ENCODE measurements at regions of chr10 and their contacts with region 1.

Region 1: DNA sequence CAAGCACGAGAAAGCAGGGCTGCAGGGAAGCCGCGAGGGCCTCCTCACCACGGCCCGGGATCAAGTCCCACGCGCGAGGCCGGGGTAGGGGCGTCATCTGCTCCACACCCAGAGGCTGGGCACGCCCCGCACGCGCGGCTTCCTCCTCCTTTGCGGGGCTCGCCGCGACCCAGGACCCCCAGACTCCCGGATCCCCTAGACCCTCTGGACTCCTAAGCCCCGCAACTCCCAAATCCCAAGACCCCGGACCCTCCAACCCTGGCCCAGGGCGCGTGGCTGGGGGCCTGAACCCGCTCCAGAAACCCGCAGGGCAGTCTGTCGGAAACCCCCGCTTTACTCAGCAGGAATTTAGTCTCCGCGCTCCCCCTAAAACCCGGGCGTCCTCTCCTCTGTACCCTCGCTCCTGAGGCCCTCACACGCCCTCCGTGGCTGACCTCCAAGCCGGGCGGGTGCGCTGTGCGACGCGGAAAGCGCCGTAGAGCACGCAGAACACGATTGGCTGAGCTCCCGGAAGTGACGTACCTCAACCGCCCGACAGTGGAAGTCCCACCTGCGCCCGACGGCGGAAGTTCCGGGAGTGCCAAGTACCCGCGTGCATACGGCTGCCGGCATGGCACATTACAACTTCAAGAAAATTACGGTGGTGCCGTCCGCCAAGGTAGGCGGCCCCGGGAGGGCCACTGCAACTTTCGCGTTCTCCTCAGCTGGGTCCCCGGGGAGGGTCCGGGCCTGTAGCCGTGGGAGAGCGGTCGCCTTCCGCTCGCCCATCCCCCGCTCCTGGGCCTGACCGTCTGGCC is at the start of gene GTPBP4:
- DNase-seq: peak; percentile 86
- ATAC-seq: peak; percentile 96
- H3K4me3 ChIP-seq: peak within 1 kb of the TSS; percentile 75
- H3K27ac ChIP-seq: peak within 1 kb of the TSS; percentile 92
- H3K4me1 ChIP-seq: peaks cover 14% of the 10 kb centered on the region
- H3K27me3 ChIP-seq: no peaks in the 10 kb centered on the region
- CTCF ChIP-seq: peak; percentile 29 to 69 (median 37); a peak in 4 of 6 replicates
- EP300 ChIP-seq: no peak
- POLR2A ChIP-seq: peak; percentile 88
- RAD21 ChIP-seq: no peak
- polyA plus RNA-seq, gene GTPBP4: 60.3 to 68.0 TPM

Region 2: DNA sequence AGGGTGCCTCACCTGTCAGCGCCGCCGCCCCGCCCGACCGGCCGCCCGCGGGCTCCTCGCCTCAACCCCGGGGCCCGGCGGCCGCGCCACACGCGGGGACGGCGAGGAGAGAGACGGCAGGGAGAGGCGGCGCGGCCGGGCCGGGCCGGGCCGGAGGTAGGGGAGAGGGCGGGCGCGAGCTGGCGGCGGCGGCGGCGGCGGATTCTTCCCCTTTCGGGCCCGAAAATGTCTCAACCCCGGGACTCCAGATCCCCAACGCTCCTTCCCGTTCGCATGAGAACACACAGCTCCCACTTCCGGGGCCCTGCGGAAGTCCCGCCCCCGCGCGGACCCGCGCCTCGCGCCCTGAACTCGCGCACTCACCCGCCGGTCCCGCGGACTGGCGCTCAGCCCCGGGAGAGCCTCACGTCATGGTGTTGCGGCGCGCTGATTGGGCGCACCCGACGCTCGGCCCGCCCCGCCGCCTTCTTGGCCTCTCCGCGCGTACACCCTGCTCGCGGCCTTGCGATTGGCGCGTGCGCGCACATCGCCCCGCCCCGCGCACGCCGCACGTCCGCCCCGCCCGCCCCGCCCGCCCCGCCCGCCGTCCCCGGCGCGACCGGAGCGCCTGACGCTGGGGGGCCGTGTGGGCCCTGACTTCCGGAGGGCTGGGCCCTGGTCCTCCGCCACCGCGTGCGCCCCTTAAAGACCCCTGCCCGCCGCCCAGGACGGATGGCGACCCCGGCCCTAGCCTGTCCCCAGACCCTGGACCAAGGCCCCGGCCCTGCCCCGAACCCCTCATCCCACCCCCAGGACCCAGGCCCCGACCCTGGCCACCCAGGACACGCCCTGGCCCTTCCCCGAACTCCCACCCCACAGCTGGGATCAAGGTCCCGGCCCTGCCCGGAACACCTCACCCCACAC is 56.4 kb before region 1 on chr10 and contains the start of gene LARP4B:
- CTCF ChIA-PET with region 1: interaction called, 5 read pairs
- POLR2A ChIA-PET with region 1: interaction called, 4 read pairs
- RAD21 ChIA-PET with region 1: interaction called, 6 read pairs
- SMC1A ChIA-PET with region 1: interaction called, 7 read pairs
- in situ Hi-C with region 1: no loop called
- intact Hi-C with region 1: loop called (anchors 2 kb)
- DNase-seq: peak; percentile 88
- ATAC-seq: peak; percentile 93
- H3K4me3 ChIP-seq: peak within 1 kb of the TSS; percentile 79
- H3K27ac ChIP-seq: peak within 1 kb of the TSS; percentile 83
- H3K4me1 ChIP-seq: peaks cover 18% of the 10 kb centered on the region
- H3K27me3 ChIP-seq: no peaks in the 10 kb centered on the region
- CTCF ChIP-seq: no peak
- EP300 ChIP-seq: no peak
- POLR2A ChIP-seq: peak; percentile 84
- RAD21 ChIP-seq: no peak
- polyA plus RNA-seq, gene LARP4B: 10.5 to 12.1 TPM

Region 3: GRCh38 chr10:1043532-1043995 is 55.5 kb after region 1 on chr10:
- CTCF ChIA-PET with region 1: interaction called, 4 read pairs
- POLR2A ChIA-PET with region 1: interaction called, 4 read pairs
- RAD21 ChIA-PET with region 1: interaction called, 9 read pairs
- SMC1A ChIA-PET with region 1: interaction called, 8 read pairs
- in situ Hi-C with region 1: no loop called
- intact Hi-C with region 1: loop called (anchors 5 kb)
- DNase-seq: peak; percentile 72
- ATAC-seq: peak; percentile 72
- H3K4me3 ChIP-seq: peak overlapping the region; percentile 69
- H3K27ac ChIP-seq: peak overlapping the region; percentile 84
- H3K4me1 ChIP-seq: peaks cover 5% of the 10 kb centered on the region
- H3K27me3 ChIP-seq: no peaks in the 10 kb centered on the region
- CTCF ChIP-seq: no peak
- EP300 ChIP-seq: no peak
- POLR2A ChIP-seq: no peak
- RAD21 ChIP-seq: no peak

Region 4: GRCh38 chr10:1198453-1199341 is 210.6 kb after region 1 on chr10:
- CTCF ChIA-PET with region 1: no interaction called
- POLR2A ChIA-PET with region 1: no interaction called
- RAD21 ChIA-PET with region 1: no interaction called
- SMC1A ChIA-PET with region 1: no interaction called
- in situ Hi-C with region 1: no loop called
- intact Hi-C with region 1: no loop called
- DNase-seq: no peak
- ATAC-seq: no peak
- H3K4me3 ChIP-seq: no peak overlapping the region
- H3K27ac ChIP-seq: no peak overlapping the region
- H3K4me1 ChIP-seq: no peaks in the 10 kb centered on the region
- H3K27me3 ChIP-seq: no peaks in the 10 kb centered on the region; a peak in 2 of 4 replicates
- CTCF ChIP-seq: no peak
- EP300 ChIP-seq: no peak
- POLR2A ChIP-seq: no peak
- RAD21 ChIP-seq: no peak